SK-N-SH (cell line): ENCODE measurements at regions of chr5 and their contacts with region 1.

Region 1: GRCh38 chr5:168047043-168047668 is 244.3 kb upstream of the WWC1 start:
- DNase-seq: peak; percentile 75
- H3K4me3 ChIP-seq: no peak overlapping the region
- H3K27ac ChIP-seq: no peak overlapping the region; a peak in 1 of 4 replicates
- H3K4me1 ChIP-seq: peaks cover 0 to 13% of the 10 kb centered on the region in 2 experiments; a peak in 2 of 4 replicates
- H3K27me3 ChIP-seq: no peaks in the 10 kb centered on the region
- CTCF ChIP-seq: peak; percentile 62
- EP300 ChIP-seq: no peak
- RAD21 ChIP-seq: peak; percentile 92

Region 2: DNA sequence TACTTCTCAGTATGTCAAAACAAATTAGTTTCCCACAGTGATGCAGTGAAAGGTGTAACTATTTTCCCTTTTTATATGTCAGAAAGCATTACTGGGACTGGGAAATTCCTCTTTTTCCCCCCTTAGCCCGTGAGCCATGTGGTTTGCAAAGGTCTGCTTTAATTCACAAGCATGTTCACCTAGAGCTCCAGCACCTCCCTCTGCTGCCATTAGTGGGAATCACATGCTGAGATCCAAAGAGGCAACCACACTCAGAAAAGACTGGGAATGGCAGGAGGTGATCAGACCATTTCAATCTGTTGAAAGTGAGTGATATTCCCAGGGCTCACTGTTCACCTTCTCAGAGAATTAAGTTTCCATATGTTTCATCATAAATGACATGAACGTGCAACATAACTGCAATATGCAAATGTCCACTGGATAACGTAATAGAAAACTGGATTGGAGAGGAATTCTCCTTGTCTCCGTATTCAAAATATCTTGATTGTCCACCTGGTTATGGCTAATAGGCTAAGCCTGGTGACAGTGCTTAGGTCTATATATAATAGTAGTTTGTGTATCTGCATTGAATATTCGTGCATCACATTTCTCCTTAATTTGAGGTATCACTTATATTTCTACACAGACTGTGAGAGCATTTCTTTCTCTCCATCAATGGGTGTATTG is 459.3 kb before region 1 on chr5:
- CTCF ChIA-PET with region 1: interaction called, 17 read pairs
- POLR2A ChIA-PET with region 1: no interaction called
- DNase-seq: peak; percentile 48
- H3K4me3 ChIP-seq: no peak overlapping the region
- H3K27ac ChIP-seq: no peak overlapping the region
- H3K4me1 ChIP-seq: no peaks in the 10 kb centered on the region
- H3K27me3 ChIP-seq: no peaks in the 10 kb centered on the region
- CTCF ChIP-seq: peak; percentile 57
- EP300 ChIP-seq: no peak
- RAD21 ChIP-seq: peak; percentile 71

Region 3: GRCh38 chr5:167730121-167730520 is 317.0 kb before region 1 on chr5:
- CTCF ChIA-PET with region 1: interaction called, 21 read pairs
- POLR2A ChIA-PET with region 1: no interaction called
- DNase-seq: no peak
- H3K4me3 ChIP-seq: no peak overlapping the region
- H3K27ac ChIP-seq: peak overlapping the region in 1 of 2 experiments; percentile 74; a peak in 2 of 4 replicates
- H3K4me1 ChIP-seq: peaks cover 0 to 42% of the 10 kb centered on the region in 2 experiments; a peak in 2 of 4 replicates
- H3K27me3 ChIP-seq: no peaks in the 10 kb centered on the region
- CTCF ChIP-seq: no peak
- EP300 ChIP-seq: peak in 1 of 2 experiments; percentile 38; a peak in 2 of 4 replicates
- RAD21 ChIP-seq: no peak

Region 4: GRCh38 chr5:167861129-167861927 is 185.8 kb before region 1 on chr5:
- CTCF ChIA-PET with region 1: no interaction called
- POLR2A ChIA-PET with region 1: no interaction called
- DNase-seq: peak; percentile 15
- H3K4me3 ChIP-seq: no peak overlapping the region
- H3K27ac ChIP-seq: no peak overlapping the region
- H3K4me1 ChIP-seq: no peaks in the 10 kb centered on the region; a peak in 2 of 4 replicates
- H3K27me3 ChIP-seq: no peaks in the 10 kb centered on the region
- CTCF ChIP-seq: no peak
- EP300 ChIP-seq: no peak
- RAD21 ChIP-seq: no peak

Region 5: GRCh38 chr5:167985373-167985772 is 61.8 kb before region 1 on chr5:
- CTCF ChIA-PET with region 1: no interaction called
- POLR2A ChIA-PET with region 1: no interaction called
- DNase-seq: no peak
- H3K4me3 ChIP-seq: no peak overlapping the region
- H3K27ac ChIP-seq: no peak overlapping the region
- H3K4me1 ChIP-seq: no peaks in the 10 kb centered on the region; a peak in 1 of 4 replicates
- H3K27me3 ChIP-seq: no peaks in the 10 kb centered on the region
- CTCF ChIP-seq: no peak
- EP300 ChIP-seq: no peak
- RAD21 ChIP-seq: no peak

Region 6: GRCh38 chr5:168008555-168008954 is 38.6 kb before region 1 on chr5:
- CTCF ChIA-PET with region 1: no interaction called
- POLR2A ChIA-PET with region 1: no interaction called
- DNase-seq: no peak
- H3K4me3 ChIP-seq: no peak overlapping the region
- H3K27ac ChIP-seq: no peak overlapping the region
- H3K4me1 ChIP-seq: no peaks in the 10 kb centered on the region; a peak in 1 of 4 replicates
- H3K27me3 ChIP-seq: no peaks in the 10 kb centered on the region
- CTCF ChIP-seq: no peak
- EP300 ChIP-seq: no peak
- RAD21 ChIP-seq: no peak

Region 7: DNA sequence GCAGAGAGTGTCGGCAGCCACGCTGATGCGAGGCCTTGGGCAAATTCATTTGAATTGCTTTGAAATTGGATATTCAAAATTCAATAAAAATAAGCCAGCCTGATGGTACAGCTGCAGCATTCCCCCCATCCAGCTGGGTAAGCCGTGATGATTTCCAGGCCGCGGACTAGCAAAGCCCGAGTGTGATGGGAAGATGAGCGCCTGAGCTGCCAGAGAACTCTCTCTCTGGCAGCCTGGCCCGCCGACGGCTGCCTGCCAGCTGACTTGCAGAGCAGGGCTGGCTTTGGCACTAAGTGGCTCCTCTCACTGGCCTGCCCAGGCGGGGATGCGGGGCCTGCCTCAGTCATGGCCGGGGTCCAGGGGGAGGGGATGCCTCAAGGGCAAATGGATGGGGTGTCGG is 24.0 kb before region 1 on chr5:
- CTCF ChIA-PET with region 1: interaction called, 14 read pairs
- POLR2A ChIA-PET with region 1: no interaction called
- DNase-seq: peak; percentile 87
- H3K4me3 ChIP-seq: no peak overlapping the region
- H3K27ac ChIP-seq: peak overlapping the region in 1 of 2 experiments; percentile 78; a peak in 2 of 4 replicates
- H3K4me1 ChIP-seq: peaks cover 0 to 23% of the 10 kb centered on the region in 2 experiments; a peak in 3 of 4 replicates
- H3K27me3 ChIP-seq: no peaks in the 10 kb centered on the region
- CTCF ChIP-seq: no peak
- EP300 ChIP-seq: peak in 1 of 2 experiments; percentile 70; a peak in 2 of 4 replicates
- RAD21 ChIP-seq: peak; percentile 22

Region 8: DNA sequence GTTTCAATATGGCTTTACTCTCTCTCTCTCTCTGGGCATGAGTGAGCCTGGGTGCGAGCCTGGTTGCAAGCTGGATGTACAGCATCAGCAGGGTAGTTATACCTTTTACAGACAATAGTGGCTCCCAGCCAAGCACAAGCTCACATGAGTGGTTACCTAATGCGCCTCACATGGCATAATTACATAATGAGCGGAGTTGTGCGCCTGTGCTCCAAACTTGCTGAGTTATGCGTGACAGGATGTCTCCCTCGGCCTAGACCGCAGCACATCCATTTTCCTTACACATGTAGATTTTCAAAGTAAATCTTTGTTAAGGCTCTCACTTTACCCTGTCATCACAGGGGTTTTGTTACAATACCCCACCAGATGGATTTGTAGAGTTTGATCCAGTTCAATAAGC is 10.7 kb after region 1 on chr5:
- CTCF ChIA-PET with region 1: interaction called, 12 read pairs
- POLR2A ChIA-PET with region 1: no interaction called
- DNase-seq: no peak
- H3K4me3 ChIP-seq: no peak overlapping the region
- H3K27ac ChIP-seq: no peak overlapping the region
- H3K4me1 ChIP-seq: no peaks in the 10 kb centered on the region; a peak in 3 of 4 replicates
- H3K27me3 ChIP-seq: no peaks in the 10 kb centered on the region
- CTCF ChIP-seq: no peak
- EP300 ChIP-seq: no peak
- RAD21 ChIP-seq: no peak

Region 9: DNA sequence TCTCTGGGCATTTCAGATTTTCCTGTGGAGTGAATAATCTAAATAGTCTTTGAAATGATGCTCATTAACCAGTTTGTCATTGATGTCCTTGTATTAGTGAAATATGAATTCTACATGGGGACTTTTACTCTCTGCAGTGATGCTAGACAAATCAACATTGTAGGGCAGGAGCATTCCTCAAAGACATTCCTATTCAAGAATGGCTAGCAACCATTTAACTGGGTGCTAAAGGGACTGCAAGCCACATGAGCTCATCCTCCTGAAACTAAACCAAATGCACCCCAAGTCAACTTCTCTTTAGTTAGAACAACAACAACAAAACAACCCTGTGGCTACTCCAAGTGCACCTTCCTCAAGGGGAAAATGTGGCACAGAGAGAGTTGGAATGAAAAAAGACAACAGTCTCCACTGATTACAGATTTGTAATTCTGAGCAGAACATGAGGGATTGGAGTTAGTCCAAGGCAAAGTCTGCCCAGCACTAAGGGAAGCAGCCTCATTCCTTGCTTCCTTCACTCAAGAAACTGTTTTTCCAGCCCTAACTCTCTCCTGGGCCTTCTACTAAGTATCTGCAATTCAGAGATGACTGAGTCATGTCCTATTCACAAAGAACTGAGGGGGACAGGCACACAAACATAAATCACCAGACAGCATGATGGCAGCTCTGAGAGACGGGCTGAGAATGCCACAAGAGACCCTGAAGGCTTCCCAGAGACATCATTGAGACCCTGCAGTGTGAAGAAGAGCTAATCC is 162.3 kb after region 1 on chr5:
- CTCF ChIA-PET with region 1: interaction called, 13 read pairs
- POLR2A ChIA-PET with region 1: no interaction called
- DNase-seq: no peak
- H3K4me3 ChIP-seq: no peak overlapping the region
- H3K27ac ChIP-seq: no peak overlapping the region
- H3K4me1 ChIP-seq: peaks cover 0 to 3% of the 10 kb centered on the region in 2 experiments; a peak in 1 of 4 replicates
- H3K27me3 ChIP-seq: no peaks in the 10 kb centered on the region
- CTCF ChIP-seq: no peak
- EP300 ChIP-seq: no peak
- RAD21 ChIP-seq: no peak